ENCODE measurements at regions of chr2 and their contacts with region 1.

Region 1: GRCh38 chr2:39216346-39217191 is 27.2 kb downstream of the CDKL4 start:
- DNase-seq: peak; percentile 79
- H3K4me3 Mint-ChIP-seq: peak overlapping the region; percentile 38
- H3K27ac Mint-ChIP-seq: peak overlapping the region; percentile 85
- H3K4me1 Mint-ChIP-seq: peaks cover 56% of the 10 kb centered on the region
- H3K27me3 Mint-ChIP-seq: no peaks in the 10 kb centered on the region

Region 2: GRCh38 chr2:38763228-38763627 is 453.3 kb before region 1 on chr2:
- CTCF ChIA-PET with region 1: no interaction called
- POLR2A ChIA-PET with region 1: no interaction called
- intact Hi-C with region 1: no loop called
- DNase-seq: no peak
- H3K4me3 Mint-ChIP-seq: no peak overlapping the region
- H3K27ac Mint-ChIP-seq: no peak overlapping the region
- H3K4me1 Mint-ChIP-seq: no peaks in the 10 kb centered on the region
- H3K27me3 Mint-ChIP-seq: no peaks in the 10 kb centered on the region

Region 3: GRCh38 chr2:39099870-39100728 is 116.5 kb before region 1 on chr2:
- CTCF ChIA-PET with region 1: no interaction called
- POLR2A ChIA-PET with region 1: no interaction called
- intact Hi-C with region 1: loop called (anchors 1 kb)
- DNase-seq: peak; percentile 49
- H3K4me3 Mint-ChIP-seq: peak overlapping the region; percentile 13
- H3K27ac Mint-ChIP-seq: peak overlapping the region; percentile 86
- H3K4me1 Mint-ChIP-seq: peaks cover 56% of the 10 kb centered on the region
- H3K27me3 Mint-ChIP-seq: no peaks in the 10 kb centered on the region

Region 4: GRCh38 chr2:39227628-39228412 is 11.3 kb after region 1 on chr2:
- CTCF ChIA-PET with region 1: interaction called, 15 read pairs
- POLR2A ChIA-PET with region 1: interaction called, 6 read pairs
- intact Hi-C with region 1: loop called (anchors 1 kb)
- DNase-seq: peak; percentile 87
- H3K4me3 Mint-ChIP-seq: peak overlapping the region; percentile 56
- H3K27ac Mint-ChIP-seq: peak overlapping the region; percentile 59
- H3K4me1 Mint-ChIP-seq: peaks cover 36% of the 10 kb centered on the region
- H3K27me3 Mint-ChIP-seq: no peaks in the 10 kb centered on the region

Region 5: DNA sequence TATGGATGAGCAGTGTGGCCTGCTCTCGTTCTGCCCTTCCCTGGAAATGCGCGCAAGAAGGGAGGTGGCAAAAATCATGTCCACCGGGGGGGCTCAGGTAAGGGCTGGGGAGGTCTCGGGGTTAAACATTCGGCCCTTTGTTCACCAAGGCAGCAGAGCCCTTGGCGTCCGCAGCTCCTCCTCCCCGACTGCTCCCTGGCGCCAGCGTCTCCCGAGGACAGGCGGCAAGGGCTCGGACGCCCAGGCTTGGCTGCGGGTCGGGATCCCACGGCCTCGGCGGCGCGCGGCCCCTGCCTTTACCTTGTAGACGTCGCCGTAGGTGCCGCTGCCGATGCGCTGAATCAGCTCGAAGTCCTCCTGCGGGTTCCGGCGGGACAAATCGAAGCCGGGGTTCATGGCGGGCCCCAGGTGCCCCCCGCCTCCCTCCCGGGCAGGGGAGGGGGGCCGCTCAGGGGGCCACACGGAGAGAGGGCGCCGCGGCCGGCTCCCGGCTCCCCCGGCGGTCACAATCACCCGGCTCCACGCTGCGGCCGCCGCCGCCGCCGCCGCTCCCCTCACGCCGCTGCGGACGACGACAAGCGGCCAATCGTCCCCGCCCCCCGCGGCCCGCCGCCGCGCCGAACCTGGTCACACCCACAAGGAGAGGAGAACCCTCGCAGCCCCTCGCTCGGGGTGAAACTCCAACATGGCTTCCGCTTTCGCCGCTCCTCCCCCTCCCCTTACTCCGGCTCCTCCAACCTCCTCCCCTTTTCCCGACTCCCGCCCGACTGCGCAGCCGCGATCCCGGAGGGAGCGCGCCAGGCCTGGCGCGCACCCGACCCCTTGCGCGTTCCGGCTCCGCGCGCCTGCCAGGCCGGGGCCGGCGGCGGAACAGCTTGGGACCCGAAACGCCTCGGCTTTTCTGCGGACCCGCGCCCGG is 220.3 kb after region 1 on chr2 and contains the start of gene MAP4K3:
- CTCF ChIA-PET with region 1: no interaction called
- POLR2A ChIA-PET with region 1: no interaction called
- intact Hi-C with region 1: loop called (anchors 5 kb)
- DNase-seq: peak; percentile 87
- H3K4me3 Mint-ChIP-seq: peak within 1 kb of the TSS; percentile 84
- H3K27ac Mint-ChIP-seq: peak within 1 kb of the TSS; percentile 82
- H3K4me1 Mint-ChIP-seq: peaks cover 65% of the 10 kb centered on the region
- H3K27me3 Mint-ChIP-seq: no peaks in the 10 kb centered on the region
- total RNA-seq, gene MAP4K3: 9.9 to 10.1 TPM

Region 6: DNA sequence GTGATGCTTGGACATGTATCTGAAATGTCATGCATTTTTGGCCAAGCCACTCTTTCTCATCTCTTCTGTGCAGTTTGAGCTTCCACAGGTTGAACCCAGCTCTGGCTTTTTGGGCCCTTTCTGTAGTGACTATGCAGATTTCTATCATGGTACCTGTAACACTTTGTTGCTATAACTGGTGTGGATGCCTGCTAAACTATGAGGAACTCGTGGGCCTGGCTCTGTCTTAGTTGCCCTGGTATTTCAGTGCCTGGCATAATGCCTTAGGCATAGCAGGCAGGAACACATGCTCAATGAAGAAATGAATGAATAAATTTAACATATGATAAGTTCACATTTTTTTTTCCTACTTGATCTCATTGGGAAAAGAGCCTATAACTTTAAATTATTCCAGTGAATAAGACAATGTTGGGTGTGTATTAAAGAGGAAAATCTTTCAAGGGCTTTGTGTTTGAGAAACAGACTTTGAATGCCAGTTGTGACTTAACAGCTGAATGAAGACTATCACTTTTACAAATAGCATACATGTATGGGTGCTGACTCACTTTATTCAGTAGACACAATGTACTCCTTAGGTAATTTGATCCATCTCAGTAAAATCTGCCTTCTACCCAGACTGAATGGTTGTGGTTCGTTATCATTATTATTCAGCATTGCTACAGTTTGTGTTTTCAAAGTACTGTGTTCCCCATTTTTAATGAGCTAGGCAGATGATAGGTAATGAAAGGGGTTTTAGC is 306.9 kb after region 1 on chr2:
- CTCF ChIA-PET with region 1: no interaction called
- POLR2A ChIA-PET with region 1: no interaction called
- intact Hi-C with region 1: no loop called
- DNase-seq: no peak
- H3K4me3 Mint-ChIP-seq: no peak overlapping the region
- H3K27ac Mint-ChIP-seq: no peak overlapping the region
- H3K4me1 Mint-ChIP-seq: no peaks in the 10 kb centered on the region
- H3K27me3 Mint-ChIP-seq: no peaks in the 10 kb centered on the region